ENCODE measurements at regions of chr5 and their contacts with region 1.

Region 1: DNA sequence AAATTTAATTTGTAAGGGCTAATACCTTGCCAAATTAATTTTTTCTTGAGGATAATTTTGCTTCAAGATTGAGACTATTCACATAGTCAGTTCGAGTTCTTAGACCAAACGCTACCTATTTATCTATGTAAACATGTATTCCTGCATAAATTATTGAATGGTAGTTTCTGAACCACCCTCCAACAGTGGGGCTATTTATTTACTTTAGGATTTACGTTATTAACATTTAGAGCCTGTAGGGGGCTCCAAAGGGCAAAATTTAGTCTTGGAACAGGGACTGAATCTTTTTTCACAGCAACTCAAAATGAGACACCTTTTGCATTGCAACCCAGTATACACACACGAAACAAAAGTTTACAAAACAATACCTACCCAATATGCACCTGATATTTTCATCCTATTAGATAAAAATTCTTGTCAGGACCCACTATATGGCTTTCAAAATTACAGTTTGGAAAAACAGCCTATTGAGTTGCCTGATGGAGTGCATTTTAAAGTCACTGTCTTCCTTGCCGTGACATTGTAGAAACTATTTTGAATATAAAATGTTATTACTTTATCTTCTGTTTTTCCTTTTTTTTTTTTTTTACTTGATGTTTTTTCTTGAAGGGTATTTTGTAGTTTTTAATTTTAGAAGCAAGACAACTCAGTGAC is 47.1 kb upstream of the POU4F3 start:
- DNase-seq: peak; percentile 64
- ATAC-seq: peak; percentile 83
- H3K4me3 ChIP-seq: no peak overlapping the region
- H3K27ac ChIP-seq: no peak overlapping the region
- H3K4me1 ChIP-seq: no peaks in the 10 kb centered on the region
- H3K27me3 ChIP-seq: no peaks in the 10 kb centered on the region
- CTCF ChIP-seq: peak; percentile 54
- EP300 ChIP-seq: no peak
- POLR2A ChIP-seq: no peak
- RAD21 ChIP-seq: peak; percentile 45; the same call in 1 of the 2 replicates

Region 2: GRCh38 chr5:146359836-146360235 is 68.3 kb after region 1 on chr5:
- CTCF ChIA-PET with region 1: no interaction called
- POLR2A ChIA-PET with region 1: no interaction called
- in situ Hi-C with region 1: no loop called
- intact Hi-C with region 1: no loop called
- DNase-seq: no peak
- ATAC-seq: no peak
- H3K4me3 ChIP-seq: no peak overlapping the region
- H3K27ac ChIP-seq: no peak overlapping the region
- H3K4me1 ChIP-seq: no peaks in the 10 kb centered on the region
- H3K27me3 ChIP-seq: no peaks in the 10 kb centered on the region
- CTCF ChIP-seq: no peak
- EP300 ChIP-seq: no peak
- POLR2A ChIP-seq: no peak
- RAD21 ChIP-seq: no peak

Region 3: GRCh38 chr5:146426853-146427618 is 135.5 kb after region 1 on chr5:
- CTCF ChIA-PET with region 1: interaction called, 16 read pairs
- POLR2A ChIA-PET with region 1: no interaction called
- in situ Hi-C with region 1: loop called (anchors 5 kb)
- intact Hi-C with region 1: loop called (anchors 1 kb)
- DNase-seq: peak; percentile 39
- ATAC-seq: peak; percentile 84
- H3K4me3 ChIP-seq: no peak overlapping the region
- H3K27ac ChIP-seq: no peak overlapping the region
- H3K4me1 ChIP-seq: 0 out of 2 replicates have a peak, but pooled peaks cover 5% of the 10 kb centered on the region
- H3K27me3 ChIP-seq: peaks cover 0 to 15% of the 10 kb centered on the region in 2 experiments; a peak in 1 of 5 replicates
- CTCF ChIP-seq: peak; percentile 75
- EP300 ChIP-seq: no peak
- POLR2A ChIP-seq: no peak
- RAD21 ChIP-seq: 0 out of 2 replicates have a peak, but pooled peaks have one; percentile 16

Measured in HepG2 (cell line).